Kidney (tissue), 22 donors: ENCODE measurements at regions of chr1 and their contacts with region 1.

Region 1: GRCh38 chr1:205485338-205486228 is 18.9 kb upstream of the CDK18 start:
- DNase-seq: peak; percentile 79 to 88 (median 86)
- H3K4me3 ChIP-seq: no peak overlapping the region
- H3K27ac ChIP-seq: no peak overlapping the region
- H3K4me1 ChIP-seq: no peaks in the 10 kb centered on the region
- H3K27me3 ChIP-seq: no peaks in the 10 kb centered on the region
- CTCF ChIP-seq: peak; percentile 94

Region 2: GRCh38 chr1:205396967-205397616 is 88.5 kb before region 1 on chr1:
- intact Hi-C with region 1: loop called (anchors 5 kb)
- DNase-seq: peak in 3 of 5 donors; percentile 49 to 74 (median 66)
- H3K4me3 ChIP-seq: no peak overlapping the region
- H3K27ac ChIP-seq: no peak overlapping the region
- H3K4me1 ChIP-seq: no peaks in the 10 kb centered on the region
- H3K27me3 ChIP-seq: no peaks in the 10 kb centered on the region
- CTCF ChIP-seq: peak; percentile 71

Region 3: DNA sequence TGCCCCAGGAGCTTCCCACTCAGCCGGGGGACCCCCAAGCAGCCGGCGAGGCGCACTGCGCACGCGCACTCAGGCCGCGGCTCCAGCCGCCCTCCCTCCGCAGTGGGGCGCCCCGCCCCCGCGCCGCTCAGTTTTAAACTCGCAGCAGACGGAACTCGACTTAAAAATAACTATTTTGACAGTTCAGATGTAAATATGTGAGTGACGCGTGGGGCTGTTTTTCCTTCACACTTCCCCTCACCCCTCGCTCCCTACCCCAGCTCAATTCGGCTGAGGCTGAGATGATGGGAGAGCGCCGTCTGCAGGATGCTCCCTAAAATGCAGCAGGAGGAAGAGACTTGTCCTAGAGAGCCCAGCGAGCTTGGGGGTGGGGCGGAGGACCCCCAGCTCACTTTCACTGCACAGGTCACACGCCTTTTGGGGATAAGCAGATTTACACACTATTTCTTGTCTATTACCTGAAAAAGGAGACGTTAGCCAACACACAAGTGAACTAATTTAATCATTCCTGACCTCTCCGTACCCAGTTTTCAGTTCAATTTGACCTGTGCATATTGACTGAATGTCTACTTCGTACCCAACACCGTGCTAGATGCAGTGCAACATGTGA is 54.8 kb before region 1 on chr1:
- intact Hi-C with region 1: loop called (anchors 10 kb)
- DNase-seq: peak in 4 of 5 donors; percentile 78 to 87 (median 81)
- H3K4me3 ChIP-seq: peak overlapping the region; percentile 55 to 65 (median 56)
- H3K27ac ChIP-seq: no peak overlapping the region
- H3K4me1 ChIP-seq: peaks cover 0 to 2% (median 0%) of the 10 kb centered on the region in 3 donors
- H3K27me3 ChIP-seq: no peaks in the 10 kb centered on the region
- CTCF ChIP-seq: peak; percentile 58

Region 4: GRCh38 chr1:205528887-205529825 is 43.6 kb after region 1 on chr1:
- intact Hi-C with region 1: loop called (anchors 5 kb)
- DNase-seq: peak; percentile 86 to 93 (median 90)
- H3K4me3 ChIP-seq: peak overlapping the region in 1 of 3 donors; percentile 43
- H3K27ac ChIP-seq: no peak overlapping the region
- H3K4me1 ChIP-seq: peaks cover 0 to 2% (median 0%) of the 10 kb centered on the region in 3 donors
- H3K27me3 ChIP-seq: no peaks in the 10 kb centered on the region
- CTCF ChIP-seq: peak; percentile 88